Activated CD4-positive, alpha-beta T cell treated with anti-CD3 and anti-CD28 coated beads, Interleukin-2, amount 10 ng/mL, durations not matched to agents 24 days and 14 days (primary cell): ENCODE measurements at regions of chr10 and their contacts with region 1.

Region 1: DNA sequence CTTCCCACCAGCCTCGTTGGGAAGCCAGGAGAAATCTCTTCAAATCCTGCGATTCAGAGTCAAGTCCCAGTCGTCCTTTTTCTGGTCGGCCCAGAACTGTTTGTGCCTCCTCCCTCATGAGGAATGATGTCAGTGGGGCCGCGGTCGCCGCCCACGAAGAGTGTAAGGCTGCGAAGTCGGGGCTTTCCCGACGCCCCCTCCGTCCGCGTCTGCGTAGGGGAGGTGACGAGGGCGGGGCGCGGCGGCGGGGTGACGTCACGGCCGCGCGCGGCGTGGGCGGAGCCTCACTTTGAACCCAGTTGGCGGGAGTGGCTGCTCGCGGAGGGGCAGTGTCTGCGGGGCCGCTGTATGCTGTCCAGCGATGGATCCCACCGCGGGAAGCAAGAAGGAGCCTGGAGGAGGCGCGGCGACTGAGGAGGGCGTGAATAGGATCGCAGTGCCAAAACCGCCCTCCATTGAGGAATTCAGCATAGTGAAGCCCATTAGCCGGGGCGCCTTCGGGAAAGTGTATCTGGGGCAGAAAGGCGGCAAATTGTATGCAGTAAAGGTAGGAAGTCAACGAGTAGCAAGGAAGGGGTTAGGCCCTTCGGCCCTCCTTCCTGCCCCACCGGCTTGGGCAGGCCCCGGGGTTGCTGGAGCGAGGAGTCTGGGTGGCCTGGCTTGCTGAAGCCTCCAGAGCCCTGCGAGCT is at the start of gene MASTL:
- DNase-seq: peak; percentile 99
- H3K4me3 Mint-ChIP-seq: peak within 1 kb of the TSS; percentile 92
- H3K27ac Mint-ChIP-seq: peak within 1 kb of the TSS; percentile 100
- H3K4me1 Mint-ChIP-seq: peaks cover 34% of the 10 kb centered on the region
- H3K27me3 Mint-ChIP-seq: no peaks in the 10 kb centered on the region
- total RNA-seq, gene MASTL: 34.0 and 34.5 TPM in 2 replicates

Region 2: DNA sequence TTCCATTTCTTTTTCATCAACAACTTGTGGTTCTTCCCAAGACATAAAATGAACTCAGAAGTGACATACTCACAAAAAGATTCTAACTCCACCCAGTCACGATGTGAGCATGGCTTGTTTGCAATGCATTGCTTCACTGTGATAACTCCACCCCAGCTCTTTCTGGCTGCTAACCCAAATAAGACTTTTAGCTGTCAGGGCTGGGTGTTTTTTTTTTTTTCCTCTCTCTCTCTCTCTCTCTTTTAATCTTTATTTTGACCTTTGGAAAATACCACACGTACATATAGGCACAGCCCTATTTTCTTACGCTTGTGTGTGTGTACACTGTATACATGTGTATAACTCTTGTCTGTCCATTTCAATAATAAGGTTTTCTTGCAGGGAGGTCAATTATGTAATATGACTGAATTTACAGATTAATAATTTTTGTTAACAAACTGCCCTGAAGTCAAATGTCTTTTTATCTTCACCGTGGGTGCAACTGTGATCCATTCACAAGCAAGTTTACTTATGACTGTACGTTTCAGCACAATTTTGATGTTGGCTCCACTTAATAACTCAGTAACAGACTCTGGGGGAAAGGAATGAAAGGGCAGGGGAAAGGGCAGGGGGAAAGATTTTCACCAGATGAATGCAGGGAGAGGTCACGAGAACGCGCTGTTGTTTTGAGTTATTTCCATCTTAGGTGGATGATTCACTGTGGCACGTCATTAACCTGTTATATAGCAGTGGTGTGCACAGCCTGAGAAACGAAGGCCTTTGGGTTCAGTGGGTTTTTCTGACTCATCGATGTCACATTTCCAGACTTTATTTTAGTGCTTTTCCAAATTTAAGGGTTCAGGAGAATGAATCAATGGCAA is 668.0 kb before region 1 on chr10:
- intact Hi-C with region 1: loop called (anchors 10 kb)
- DNase-seq: peak; percentile 90
- H3K4me3 Mint-ChIP-seq: peak overlapping the region; percentile 76
- H3K27ac Mint-ChIP-seq: peak overlapping the region; percentile 96
- H3K4me1 Mint-ChIP-seq: peaks cover 52% of the 10 kb centered on the region
- H3K27me3 Mint-ChIP-seq: no peaks in the 10 kb centered on the region

Region 3: GRCh38 chr10:26860443-26861204 is 294.6 kb before region 1 on chr10 and contains the start of gene ABI1:
- intact Hi-C with region 1: loop called (anchors 1 kb)
- DNase-seq: peak; percentile 99
- H3K4me3 Mint-ChIP-seq: peak within 1 kb of the TSS; percentile 88
- H3K27ac Mint-ChIP-seq: peak within 1 kb of the TSS; percentile 98
- H3K4me1 Mint-ChIP-seq: peaks cover 32% of the 10 kb centered on the region
- H3K27me3 Mint-ChIP-seq: peaks cover 10% of the 10 kb centered on the region
- total RNA-seq, gene ABI1: 54.5 and 55.7 TPM in 2 replicates

Region 4: DNA sequence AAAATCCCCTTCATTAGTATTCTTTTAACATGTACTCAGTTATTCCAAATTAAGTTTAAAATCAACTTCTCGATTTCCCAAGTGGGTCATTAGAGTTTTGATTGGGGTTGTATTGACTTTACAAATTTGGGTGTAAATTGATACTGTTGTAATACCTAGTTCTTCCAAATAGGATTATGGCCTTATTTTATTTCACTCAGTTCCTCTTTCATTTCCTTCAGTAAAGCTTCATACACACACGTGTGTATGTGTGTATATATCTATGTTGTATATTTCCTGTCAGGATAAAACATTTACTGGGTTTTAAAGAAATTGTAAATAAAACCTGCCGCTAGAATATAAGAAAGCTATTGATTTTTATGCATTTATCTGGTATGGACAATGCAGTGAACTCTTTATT is 16.9 kb before region 1 on chr10:
- intact Hi-C with region 1: loop called (anchors 2 kb)
- DNase-seq: no peak
- H3K4me3 Mint-ChIP-seq: no peak overlapping the region
- H3K27ac Mint-ChIP-seq: no peak overlapping the region
- H3K4me1 Mint-ChIP-seq: peaks cover 7% of the 10 kb centered on the region
- H3K27me3 Mint-ChIP-seq: no peaks in the 10 kb centered on the region

Region 5: DNA sequence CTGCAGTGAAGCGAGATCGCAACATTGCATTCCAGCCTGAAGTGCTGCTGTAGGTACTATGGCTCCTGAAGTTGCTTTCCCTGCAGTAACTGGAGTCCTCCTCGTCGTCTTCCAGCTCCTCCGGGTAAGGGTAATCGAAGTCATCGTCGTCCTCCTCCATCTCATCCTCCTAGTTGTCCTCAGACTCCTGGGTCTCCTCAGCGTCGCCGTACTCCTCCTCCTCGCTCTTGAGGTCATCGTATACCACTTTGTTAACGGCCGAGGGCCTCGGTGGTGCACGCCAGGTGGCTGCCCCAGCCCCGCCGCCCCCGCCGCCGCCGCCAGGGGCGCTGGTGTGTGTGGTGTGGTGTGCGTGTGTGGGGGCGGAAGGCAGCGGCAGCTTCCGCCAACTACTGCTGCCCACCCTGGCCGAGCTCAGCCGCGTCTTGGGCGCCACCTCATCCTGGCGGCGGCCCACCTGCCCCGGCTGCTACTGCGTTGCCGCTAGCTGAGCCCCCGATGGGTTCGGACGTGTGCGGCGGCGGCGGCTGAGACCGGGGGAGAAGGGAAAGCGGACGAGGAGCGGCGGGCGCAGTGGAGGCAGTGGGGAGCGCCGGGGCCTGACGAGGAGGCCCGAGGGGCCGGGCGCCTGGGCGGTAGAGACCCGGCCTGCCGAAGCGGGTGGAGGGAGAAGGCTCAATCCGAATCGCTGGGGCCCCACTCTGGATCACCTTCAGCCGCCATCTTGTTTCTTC is 97.2 kb after region 1 on chr10:
- intact Hi-C with region 1: no loop called
- DNase-seq: peak; percentile 95
- H3K4me3 Mint-ChIP-seq: peak overlapping the region; percentile 82
- H3K27ac Mint-ChIP-seq: peak overlapping the region; percentile 85
- H3K4me1 Mint-ChIP-seq: peaks cover 17% of the 10 kb centered on the region
- H3K27me3 Mint-ChIP-seq: peaks cover 7% of the 10 kb centered on the region

Region 6: GRCh38 chr10:27360581-27361172 is 205.5 kb after region 1 on chr10:
- intact Hi-C with region 1: loop called (anchors 1 kb)
- DNase-seq: peak; percentile 95
- H3K4me3 Mint-ChIP-seq: no peak overlapping the region
- H3K27ac Mint-ChIP-seq: no peak overlapping the region
- H3K4me1 Mint-ChIP-seq: peaks cover 3% of the 10 kb centered on the region
- H3K27me3 Mint-ChIP-seq: no peaks in the 10 kb centered on the region

Region 7: GRCh38 chr10:28532383-28533175 is 1377.4 kb after region 1 on chr10 and contains the start of gene WAC:
- intact Hi-C with region 1: loop called (anchors 1 kb)
- DNase-seq: peak; percentile 99
- H3K4me3 Mint-ChIP-seq: peak within 1 kb of the TSS; percentile 98
- H3K27ac Mint-ChIP-seq: peak within 1 kb of the TSS; percentile 100
- H3K4me1 Mint-ChIP-seq: peaks cover 45% of the 10 kb centered on the region
- H3K27me3 Mint-ChIP-seq: peaks cover 1% of the 10 kb centered on the region
- total RNA-seq, gene WAC: 125 and 130 TPM in 2 replicates